Esophagus squamous epithelium (tissue), 5 donors: ENCODE measurements at regions of chr20 and their contacts with region 1.

Region 1: GRCh38 chr20:25399037-25399430 is 8.4 kb upstream of the ABHD12 start:
- DNase-seq: no peak
- H3K4me3 ChIP-seq: no peak overlapping the region
- H3K27ac ChIP-seq: no peak overlapping the region
- H3K4me1 ChIP-seq: peaks cover 0 to 19% (median 0%) of the 10 kb centered on the region in 3 donors
- H3K27me3 ChIP-seq: peaks cover 0 to 3% (median 0%) of the 10 kb centered on the region in 4 donors
- CTCF ChIP-seq: peak in 5 of 6 experiments; percentile 48 to 68 (median 54)
- POLR2A ChIP-seq: no peak

Region 2: GRCh38 chr20:25310268-25310920 is 88.6 kb before region 1 on chr20:
- intact Hi-C with region 1: loop called (anchors 5 kb)
- DNase-seq: peak; percentile 37
- H3K4me3 ChIP-seq: peak overlapping the region in 2 of 4 donors; percentile 13 to 39
- H3K27ac ChIP-seq: peak overlapping the region; percentile 70 to 92 (median 77)
- H3K4me1 ChIP-seq: peaks cover 14 to 30% (median 24%) of the 10 kb centered on the region in 3 donors
- H3K27me3 ChIP-seq: no peaks in the 10 kb centered on the region
- CTCF ChIP-seq: peak in 5 of 6 experiments; percentile 26 to 65 (median 34)
- POLR2A ChIP-seq: peak in 1 of 4 donors; percentile 8